Endothelial cell of umbilical vein (primary cell): ENCODE measurements at regions of chr1 and their contacts with region 1.

Region 1: GRCh38 chr1:101238681-101239094 is 1.9 kb downstream of the S1PR1 start:
- DNase-seq: peak; percentile 94
- H3K4me3 ChIP-seq: peak overlapping the region; percentile 81 to 100 (median 88)
- H3K27ac ChIP-seq: peak overlapping the region; percentile 99
- H3K4me1 ChIP-seq: peaks cover 55% of the 10 kb centered on the region
- H3K27me3 ChIP-seq: no peaks in the 10 kb centered on the region
- CTCF ChIP-seq: peak; percentile 97 to 98
- POLR2A ChIP-seq: peak; percentile 46

Region 2: DNA sequence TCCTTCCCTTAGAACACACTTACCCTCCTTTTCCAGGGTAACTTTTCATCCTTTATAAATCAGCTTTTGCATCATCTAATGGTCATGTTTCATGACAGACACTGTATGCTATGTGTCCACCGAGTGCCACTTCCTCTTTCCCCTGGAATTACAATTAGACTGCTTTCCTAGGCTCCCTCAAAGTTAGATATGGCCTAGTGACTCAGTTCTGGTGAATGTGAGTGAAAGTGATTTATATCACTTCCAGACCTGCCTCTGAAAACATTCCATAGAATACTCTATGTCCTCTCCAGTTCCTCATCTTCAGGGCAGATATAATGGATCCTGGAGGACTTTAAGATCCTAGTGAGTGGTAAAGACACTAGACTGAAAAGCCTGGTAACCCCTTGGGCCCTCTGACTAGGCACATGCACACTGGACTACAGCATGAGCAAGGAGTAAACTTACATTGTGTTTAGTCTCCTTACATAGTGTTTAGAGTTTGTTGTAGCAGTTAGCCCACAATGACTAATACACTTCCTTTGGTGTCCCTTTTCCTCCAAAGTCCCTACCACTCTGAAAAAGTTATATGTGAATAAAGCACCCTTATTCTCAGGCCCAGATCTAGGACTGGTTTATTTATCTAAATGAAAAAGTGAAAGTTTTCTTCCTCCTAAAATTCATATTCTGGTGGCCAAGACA is 641.5 kb before region 1 on chr1:
- CTCF ChIA-PET with region 1: no interaction called
- POLR2A ChIA-PET with region 1: no interaction called
- dilution Hi-C with region 1: no loop called
- intact Hi-C with region 1: loop called (anchors 1 kb)
- DNase-seq: peak; percentile 95
- H3K4me3 ChIP-seq: no peak overlapping the region
- H3K27ac ChIP-seq: peak overlapping the region; percentile 93
- H3K4me1 ChIP-seq: peaks cover 28% of the 10 kb centered on the region
- H3K27me3 ChIP-seq: no peaks in the 10 kb centered on the region
- CTCF ChIP-seq: no peak
- POLR2A ChIP-seq: no peak

Region 3: DNA sequence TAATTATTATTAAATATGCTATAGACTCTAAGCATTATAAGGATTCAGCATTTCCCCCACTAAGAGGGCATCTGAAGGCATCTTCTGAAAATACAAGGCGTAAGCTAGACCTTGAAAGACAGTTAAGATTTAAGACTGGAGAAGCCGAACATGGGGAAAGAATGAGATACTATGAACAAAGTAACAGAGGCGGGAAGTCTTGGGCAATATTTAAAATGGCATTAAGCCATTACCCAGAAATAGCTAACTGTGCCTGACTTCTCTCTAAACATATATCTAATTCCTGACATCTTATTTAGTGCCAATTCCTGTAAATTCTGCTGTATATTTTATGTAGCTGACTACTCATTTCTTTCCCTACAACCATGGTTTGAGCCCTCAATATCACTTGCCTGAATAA is 234.0 kb before region 1 on chr1:
- CTCF ChIA-PET with region 1: interaction called, 3 read pairs
- POLR2A ChIA-PET with region 1: no interaction called
- dilution Hi-C with region 1: no loop called
- intact Hi-C with region 1: loop called (anchors 1 kb)
- DNase-seq: no peak
- H3K4me3 ChIP-seq: no peak overlapping the region
- H3K27ac ChIP-seq: no peak overlapping the region
- H3K4me1 ChIP-seq: peaks cover 38% of the 10 kb centered on the region
- H3K27me3 ChIP-seq: no peaks in the 10 kb centered on the region
- CTCF ChIP-seq: no peak
- POLR2A ChIP-seq: no peak

Region 4: DNA sequence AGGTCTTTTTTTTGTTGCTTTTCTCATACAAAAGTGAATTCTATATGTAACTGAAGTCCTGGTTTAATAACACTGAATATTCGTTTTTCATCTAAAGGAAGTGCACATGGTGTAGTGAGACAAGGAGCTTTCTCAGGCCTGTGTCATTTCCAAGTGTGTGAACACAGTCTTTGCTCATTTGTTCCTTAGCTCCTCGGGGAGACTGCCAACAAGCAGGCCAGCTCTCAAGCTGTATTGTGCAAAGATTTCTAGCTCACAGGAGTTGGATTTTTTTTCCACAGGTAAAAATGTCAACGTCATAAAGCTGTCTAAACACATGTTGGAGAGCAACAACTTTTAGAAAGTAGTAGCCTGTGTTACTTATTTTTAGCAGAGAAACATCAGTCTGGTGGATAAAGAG is 89.7 kb before region 1 on chr1:
- CTCF ChIA-PET with region 1: interaction called, 16 read pairs
- POLR2A ChIA-PET with region 1: interaction called, 3 read pairs
- dilution Hi-C with region 1: no loop called
- intact Hi-C with region 1: no loop called
- DNase-seq: peak; percentile 84
- H3K4me3 ChIP-seq: no peak overlapping the region
- H3K27ac ChIP-seq: peak overlapping the region; percentile 19
- H3K4me1 ChIP-seq: peaks cover 30% of the 10 kb centered on the region
- H3K27me3 ChIP-seq: no peaks in the 10 kb centered on the region
- CTCF ChIP-seq: no peak
- POLR2A ChIP-seq: no peak

Region 5: GRCh38 chr1:101217148-101217547 is 21.5 kb before region 1 on chr1:
- CTCF ChIA-PET with region 1: interaction called, 3 read pairs
- POLR2A ChIA-PET with region 1: interaction called, 16 read pairs
- dilution Hi-C with region 1: no loop called
- intact Hi-C with region 1: no loop called
- DNase-seq: no peak
- H3K4me3 ChIP-seq: no peak overlapping the region
- H3K27ac ChIP-seq: no peak overlapping the region
- H3K4me1 ChIP-seq: no peaks in the 10 kb centered on the region
- H3K27me3 ChIP-seq: no peaks in the 10 kb centered on the region
- CTCF ChIP-seq: no peak
- POLR2A ChIP-seq: no peak

Region 6: DNA sequence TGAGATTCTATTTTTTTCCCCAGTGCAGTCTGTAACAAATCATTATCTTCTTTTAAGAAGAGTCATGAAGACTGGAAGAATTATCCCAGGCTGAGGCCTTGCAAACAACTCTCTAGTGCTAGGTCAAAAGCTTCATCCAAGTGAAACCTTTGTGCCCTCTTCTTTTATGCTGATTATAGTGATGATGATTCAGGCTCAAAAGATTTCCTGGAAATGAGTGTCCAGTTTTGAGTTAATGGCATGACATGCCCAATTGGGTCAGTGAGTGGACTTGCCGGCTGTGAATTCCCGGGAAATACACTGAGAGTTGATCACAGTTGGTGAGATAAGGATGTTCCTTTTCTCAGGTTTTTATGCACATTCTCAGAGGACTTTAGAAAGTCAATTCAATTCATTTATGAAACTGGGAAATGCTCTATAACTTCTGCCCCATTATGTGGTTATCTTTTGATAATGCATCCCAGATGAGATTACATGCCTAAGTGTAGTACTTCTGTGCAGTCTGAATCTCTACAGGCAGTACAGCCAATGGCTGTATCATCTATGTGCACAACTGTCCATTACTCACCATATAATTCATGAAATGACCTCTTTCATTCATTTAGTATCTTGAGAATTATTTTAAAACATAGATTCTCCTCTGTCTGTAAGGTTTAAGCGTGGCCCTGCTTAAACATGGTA is 64.3 kb after region 1 on chr1:
- CTCF ChIA-PET with region 1: interaction called, 12 read pairs
- POLR2A ChIA-PET with region 1: no interaction called
- dilution Hi-C with region 1: no loop called
- intact Hi-C with region 1: loop called (anchors 1 kb)
- DNase-seq: peak; percentile 82
- H3K4me3 ChIP-seq: no peak overlapping the region
- H3K27ac ChIP-seq: peak overlapping the region; percentile 51
- H3K4me1 ChIP-seq: peaks cover 59% of the 10 kb centered on the region
- H3K27me3 ChIP-seq: no peaks in the 10 kb centered on the region
- CTCF ChIP-seq: no peak
- POLR2A ChIP-seq: peak; percentile 17

Region 7: GRCh38 chr1:101550581-101550980 is 311.9 kb after region 1 on chr1:
- CTCF ChIA-PET with region 1: no interaction called
- POLR2A ChIA-PET with region 1: no interaction called
- dilution Hi-C with region 1: no loop called
- intact Hi-C with region 1: no loop called
- DNase-seq: no peak
- H3K4me3 ChIP-seq: no peak overlapping the region
- H3K27ac ChIP-seq: no peak overlapping the region
- H3K4me1 ChIP-seq: no peaks in the 10 kb centered on the region
- H3K27me3 ChIP-seq: peaks cover 0 to 2% of the 10 kb centered on the region in 2 experiments
- CTCF ChIP-seq: no peak
- POLR2A ChIP-seq: no peak